ENCODE measurements at regions of chr7 and their contacts with region 1.

Region 1: GRCh38 chr7:102396027-102397019 is at the start of gene PRKRIP1:
- DNase-seq: peak; percentile 98
- ATAC-seq: peak; percentile 99
- H3K4me3 ChIP-seq: peak within 1 kb of the TSS; percentile 67 to 98 (median 95)
- H3K4me3 Mint-ChIP-seq: peak within 1 kb of the TSS; percentile 87
- H3K27ac ChIP-seq: peak within 1 kb of the TSS; percentile 86 to 88
- H3K27ac Mint-ChIP-seq: peak within 1 kb of the TSS; percentile 92
- H3K4me1 ChIP-seq: peaks cover 15 to 21% of the 10 kb centered on the region in 2 donors
- H3K4me1 Mint-ChIP-seq: peaks cover 29% of the 10 kb centered on the region
- H3K27me3 ChIP-seq: no peaks in the 10 kb centered on the region
- H3K27me3 Mint-ChIP-seq: no peaks in the 10 kb centered on the region
- CTCF ChIP-seq: no peak
- total RNA-seq, gene PRKRIP1: 57.9 and 59.1 TPM in 2 replicates

Region 2: DNA sequence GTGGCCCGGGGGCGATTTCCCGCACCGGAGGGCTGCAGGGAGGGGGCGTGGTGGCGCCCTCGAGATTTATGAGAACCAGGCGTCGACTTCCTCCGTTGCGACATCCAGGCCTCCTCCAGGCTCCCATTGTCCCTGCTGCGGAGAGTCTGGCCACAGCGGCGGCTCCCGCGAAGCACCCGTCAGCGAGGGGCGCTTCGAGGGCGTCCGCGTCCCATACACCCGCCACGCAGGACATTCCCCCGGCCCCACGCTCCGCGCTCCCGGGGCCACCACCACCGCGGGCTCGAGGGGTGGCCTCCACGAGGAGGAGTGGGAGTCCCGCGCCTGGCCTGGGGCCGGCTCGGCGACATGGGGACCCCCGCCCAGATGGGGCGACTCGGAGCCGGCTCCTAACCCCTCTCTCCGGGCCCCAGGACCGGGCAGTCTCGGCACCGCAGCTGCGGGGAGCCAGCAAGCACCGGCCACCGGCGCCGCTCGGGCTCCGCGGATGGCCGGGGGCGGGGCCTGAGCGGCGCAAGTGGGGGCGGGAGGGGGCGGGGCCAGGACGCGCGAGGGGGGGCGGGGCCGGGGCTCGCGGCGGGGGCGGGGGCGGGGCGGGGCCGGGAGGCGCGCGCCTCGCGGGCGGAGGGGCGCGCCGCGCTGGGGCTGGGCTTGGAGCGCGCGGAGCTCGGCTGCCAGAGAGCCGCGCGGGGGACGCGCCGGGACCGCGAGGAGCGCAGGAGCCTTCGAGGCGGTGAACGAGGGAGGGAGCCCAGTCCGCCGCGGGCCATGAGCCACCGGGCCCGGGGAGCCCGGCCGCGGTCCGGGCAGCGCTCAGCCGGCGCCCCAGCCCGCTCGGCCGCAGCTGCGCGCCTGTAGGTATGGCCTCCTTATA is 109.8 kb before region 1 on chr7 and contains the start of gene SH2B2:
- CTCF ChIA-PET with region 1: interaction called, 351 read pairs
- POLR2A ChIA-PET with region 1: interaction called, 7 read pairs
- intact Hi-C with region 1: loop called (anchors 1 kb)
- DNase-seq: peak; percentile 87
- ATAC-seq: peak; percentile 41
- H3K4me3 ChIP-seq: peak within 1 kb of the TSS; percentile 61 to 97 (median 90)
- H3K4me3 Mint-ChIP-seq: peak within 1 kb of the TSS; percentile 89
- H3K27ac ChIP-seq: peak within 1 kb of the TSS; percentile 50 to 74
- H3K27ac Mint-ChIP-seq: peak within 1 kb of the TSS; percentile 89
- H3K4me1 ChIP-seq: peaks cover 54 to 68% of the 10 kb centered on the region in 2 donors
- H3K4me1 Mint-ChIP-seq: peaks cover 65% of the 10 kb centered on the region
- H3K27me3 ChIP-seq: no peaks in the 10 kb centered on the region
- H3K27me3 Mint-ChIP-seq: no peaks in the 10 kb centered on the region
- CTCF ChIP-seq: no peak
- total RNA-seq, gene SH2B2: 41.2 and 47.7 TPM in 2 replicates

Region 3: GRCh38 chr7:102425639-102426267 is 29.4 kb after region 1 on chr7:
- CTCF ChIA-PET with region 1: interaction called, 1,182 read pairs
- POLR2A ChIA-PET with region 1: interaction called, 9 read pairs
- intact Hi-C with region 1: loop called (anchors 1 kb)
- DNase-seq: peak; percentile 95
- ATAC-seq: peak; percentile 76
- H3K4me3 ChIP-seq: peak overlapping the region; percentile 30 to 48 (median 39)
- H3K4me3 Mint-ChIP-seq: peak overlapping the region; percentile 87
- H3K27ac ChIP-seq: peak overlapping the region; percentile 100
- H3K27ac Mint-ChIP-seq: peak overlapping the region; percentile 100
- H3K4me1 ChIP-seq: peaks cover 94 to 99% of the 10 kb centered on the region in 2 donors
- H3K4me1 Mint-ChIP-seq: peaks cover 79% of the 10 kb centered on the region
- H3K27me3 ChIP-seq: no peaks in the 10 kb centered on the region
- H3K27me3 Mint-ChIP-seq: no peaks in the 10 kb centered on the region
- CTCF ChIP-seq: no peak

Region 4: DNA sequence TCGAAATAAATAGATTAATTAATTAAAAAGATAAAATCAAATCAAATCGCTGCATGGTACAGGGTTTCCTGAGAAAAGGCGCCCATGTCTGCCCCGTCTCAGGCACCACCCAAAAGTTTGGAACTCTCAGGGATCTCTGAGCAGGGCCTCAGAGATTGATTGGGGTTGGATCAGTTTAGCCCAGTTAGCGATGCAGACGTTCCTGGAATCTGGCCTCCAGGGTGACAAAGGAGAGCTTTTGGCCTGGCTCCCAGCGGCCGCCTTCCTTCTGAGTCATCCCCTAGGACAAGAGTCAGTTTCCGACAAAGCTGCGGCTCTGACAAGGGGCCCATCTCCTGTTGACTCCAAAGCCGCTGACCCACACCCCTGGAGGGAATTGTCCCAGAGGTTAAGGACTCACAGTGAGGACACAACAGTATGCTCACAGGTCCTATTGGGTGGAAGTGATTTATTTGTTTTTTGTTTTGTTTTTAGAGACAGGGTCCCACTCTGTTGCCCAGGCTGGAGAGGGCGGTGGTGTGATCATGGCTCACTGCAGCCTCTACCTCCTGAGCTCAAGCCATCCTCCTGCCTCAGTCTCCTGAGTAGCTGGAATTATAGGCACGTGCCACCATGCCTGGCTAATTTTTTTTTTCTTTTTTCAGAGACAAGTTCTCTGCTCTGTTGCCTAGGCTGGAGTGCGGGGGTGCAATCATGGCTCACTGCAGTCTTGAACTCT is 43.9 kb after region 1 on chr7:
- CTCF ChIA-PET with region 1: interaction called, 1,182 read pairs
- POLR2A ChIA-PET with region 1: interaction called, 18 read pairs
- intact Hi-C with region 1: loop called (anchors 1 kb)
- DNase-seq: no peak
- ATAC-seq: no peak
- H3K4me3 ChIP-seq: no peak overlapping the region
- H3K4me3 Mint-ChIP-seq: no peak overlapping the region
- H3K27ac ChIP-seq: peak overlapping the region; percentile 90
- H3K27ac Mint-ChIP-seq: no peak overlapping the region
- H3K4me1 ChIP-seq: peaks cover 52 to 76% of the 10 kb centered on the region in 2 donors
- H3K4me1 Mint-ChIP-seq: peaks cover 54% of the 10 kb centered on the region
- H3K27me3 ChIP-seq: no peaks in the 10 kb centered on the region
- H3K27me3 Mint-ChIP-seq: no peaks in the 10 kb centered on the region
- CTCF ChIP-seq: no peak

Measured in B cell (primary cell).